CD4-positive, alpha-beta memory T cell (primary cell): ENCODE measurements at regions of chr2 and their contacts with region 1.

Region 1: GRCh38 chr2:179253226-179253625 is 11.4 kb downstream of the SESTD1 start:
- DNase-seq: no peak
- H3K4me3 ChIP-seq: no peak overlapping the region
- H3K4me3 Mint-ChIP-seq: peak overlapping the region in 3 of 8 donors; percentile 12 to 73 (median 56)
- H3K27ac ChIP-seq: no peak overlapping the region
- H3K27ac Mint-ChIP-seq: peak overlapping the region in 1 of 7 donors; percentile 33
- H3K4me1 ChIP-seq: no peaks in the 10 kb centered on the region
- H3K4me1 Mint-ChIP-seq: peaks cover 0 to 34% (median 9%) of the 10 kb centered on the region in 4 donors
- H3K27me3 ChIP-seq: no peaks in the 10 kb centered on the region
- H3K27me3 Mint-ChIP-seq: no peaks in the 10 kb centered on the region

Region 2: GRCh38 chr2:179049546-179050311 is 203.5 kb before region 1 on chr2 and contains the start of gene CCDC141:
- CTCF ChIA-PET with region 1: no interaction called
- POLR2A ChIA-PET with region 1: no interaction called
- intact Hi-C with region 1: no loop called
- DNase-seq: peak in 3 of 5 donors; percentile 10 to 22 (median 17)
- H3K4me3 ChIP-seq: peak within 1 kb of the TSS; percentile 57 to 58
- H3K4me3 Mint-ChIP-seq: peak within 1 kb of the TSS; percentile 83 to 89 (median 86)
- H3K27ac ChIP-seq: peak within 1 kb of the TSS; percentile 54
- H3K27ac Mint-ChIP-seq: peak within 1 kb of the TSS; percentile 37 to 92 (median 66)
- H3K4me1 ChIP-seq: peaks cover 19% of the 10 kb centered on the region
- H3K4me1 Mint-ChIP-seq: peaks cover 6 to 29% (median 17%) of the 10 kb centered on the region in 4 donors
- H3K27me3 ChIP-seq: no peaks in the 10 kb centered on the region
- H3K27me3 Mint-ChIP-seq: no peaks in the 10 kb centered on the region
- total RNA-seq, gene CCDC141: 8.2 TPM

Region 3: DNA sequence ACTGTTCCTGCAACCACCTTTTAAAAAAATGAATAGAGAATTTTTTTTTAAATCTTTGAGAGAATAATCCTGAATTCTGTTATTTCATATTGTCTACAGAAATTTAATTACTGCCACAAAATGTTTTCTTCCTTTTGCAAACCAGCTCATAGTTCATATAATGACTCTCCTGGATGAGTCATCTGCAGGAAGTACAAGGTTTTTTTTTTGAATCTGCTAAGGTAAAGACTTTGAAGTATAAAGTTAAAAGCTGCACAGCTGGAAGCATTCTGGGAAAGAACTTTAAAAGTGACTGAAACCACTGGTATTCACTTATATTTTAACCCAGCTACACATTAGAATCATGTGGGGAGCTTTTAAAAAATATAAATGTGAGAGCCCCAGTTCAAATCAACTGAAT is 14.0 kb before region 1 on chr2:
- CTCF ChIA-PET with region 1: interaction called, 3 read pairs
- POLR2A ChIA-PET with region 1: interaction called, 3 read pairs
- intact Hi-C with region 1: loop called (anchors 2 kb)
- DNase-seq: peak in 2 of 5 donors; percentile 14 to 28
- H3K4me3 ChIP-seq: no peak overlapping the region
- H3K4me3 Mint-ChIP-seq: peak overlapping the region in 1 of 8 donors; percentile 8
- H3K27ac ChIP-seq: no peak overlapping the region
- H3K27ac Mint-ChIP-seq: peak overlapping the region in 2 of 7 donors; percentile 54 to 65
- H3K4me1 ChIP-seq: peaks cover 18% of the 10 kb centered on the region
- H3K4me1 Mint-ChIP-seq: peaks cover 0 to 39% (median 8%) of the 10 kb centered on the region in 4 donors
- H3K27me3 ChIP-seq: no peaks in the 10 kb centered on the region
- H3K27me3 Mint-ChIP-seq: peaks cover 0 to 2% of the 10 kb centered on the region in 2 donors

Region 4: DNA sequence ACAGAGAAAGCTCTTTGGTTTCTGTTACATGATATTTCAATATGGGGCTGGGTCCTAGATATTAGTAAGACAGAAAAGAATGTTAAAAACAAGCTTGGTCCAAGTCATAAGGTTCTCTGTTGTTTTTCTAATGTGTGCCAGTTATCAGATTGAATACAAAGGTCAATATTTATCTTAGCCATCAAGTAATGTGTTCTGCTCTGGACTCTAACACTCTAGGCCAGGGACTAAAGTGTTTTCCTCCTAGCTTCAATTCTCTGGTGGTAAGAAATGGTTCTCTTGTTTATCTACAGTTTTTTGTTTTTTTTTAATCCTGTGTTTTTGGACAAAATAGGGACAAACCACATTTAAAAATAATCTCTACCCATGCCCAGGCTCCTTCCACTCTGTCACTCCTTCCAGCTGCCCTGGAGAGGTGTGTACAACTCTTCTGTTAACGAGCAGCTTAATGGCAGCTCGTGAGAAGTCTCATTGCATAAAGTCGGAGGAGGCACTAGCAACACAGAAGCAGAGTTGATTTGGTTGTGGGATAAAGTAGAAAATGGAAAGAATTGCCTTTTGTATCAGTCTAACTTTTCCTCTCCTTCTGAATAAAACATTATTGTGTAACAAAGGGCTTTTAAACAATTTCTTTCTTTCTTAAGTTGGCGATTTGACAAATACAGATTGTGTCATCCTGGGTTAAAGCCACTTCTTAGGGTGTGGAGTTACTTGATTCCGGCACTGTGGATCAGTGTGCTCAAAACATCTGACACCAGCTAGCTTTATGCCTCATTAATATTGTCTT is 19.4 kb after region 1 on chr2:
- CTCF ChIA-PET with region 1: no interaction called
- POLR2A ChIA-PET with region 1: no interaction called
- intact Hi-C with region 1: no loop called
- DNase-seq: no peak
- H3K4me3 ChIP-seq: no peak overlapping the region
- H3K4me3 Mint-ChIP-seq: no peak overlapping the region
- H3K27ac ChIP-seq: no peak overlapping the region
- H3K27ac Mint-ChIP-seq: no peak overlapping the region
- H3K4me1 ChIP-seq: no peaks in the 10 kb centered on the region
- H3K4me1 Mint-ChIP-seq: no peaks in the 10 kb centered on the region
- H3K27me3 ChIP-seq: no peaks in the 10 kb centered on the region
- H3K27me3 Mint-ChIP-seq: peaks cover 0 to 6% of the 10 kb centered on the region in 2 donors

Region 5: GRCh38 chr2:179460181-179460929 is 207.1 kb after region 1 on chr2:
- CTCF ChIA-PET with region 1: no interaction called
- POLR2A ChIA-PET with region 1: no interaction called
- intact Hi-C with region 1: no loop called
- DNase-seq: no peak
- H3K4me3 ChIP-seq: no peak overlapping the region
- H3K4me3 Mint-ChIP-seq: no peak overlapping the region
- H3K27ac ChIP-seq: no peak overlapping the region
- H3K27ac Mint-ChIP-seq: no peak overlapping the region
- H3K4me1 ChIP-seq: no peaks in the 10 kb centered on the region
- H3K4me1 Mint-ChIP-seq: no peaks in the 10 kb centered on the region
- H3K27me3 ChIP-seq: no peaks in the 10 kb centered on the region
- H3K27me3 Mint-ChIP-seq: peaks cover 0 to 2% of the 10 kb centered on the region in 2 donors